MCF 10A (cell line): ENCODE measurements at regions of chr16 and their contacts with region 1.

Region 1: DNA sequence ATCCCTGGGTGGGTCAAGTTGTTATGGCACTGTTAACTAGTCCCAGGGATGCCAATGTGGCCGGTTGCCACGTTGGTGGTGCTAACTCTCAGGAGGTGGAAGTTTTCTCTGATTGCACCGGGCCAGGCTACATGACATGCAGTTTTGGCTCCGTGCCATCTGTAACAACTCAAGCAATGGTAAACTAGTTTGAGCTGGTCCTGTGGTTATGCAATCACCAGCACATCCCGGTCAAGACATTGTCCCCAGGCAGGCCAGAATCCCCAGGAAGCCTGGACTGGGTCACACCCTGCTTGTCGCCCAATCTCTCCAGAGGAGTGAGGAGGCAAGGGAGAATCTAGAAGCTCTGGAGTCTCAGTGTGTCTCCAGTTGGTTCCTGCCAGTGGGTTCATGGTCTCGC is 10.1 kb upstream of the CCL17 start:
- DNase-seq: peak; percentile 82
- H3K4me3 Mint-ChIP-seq: no peak overlapping the region
- H3K27ac Mint-ChIP-seq: no peak overlapping the region
- H3K4me1 Mint-ChIP-seq: no peaks in the 10 kb centered on the region
- H3K27me3 Mint-ChIP-seq: peaks cover 17% of the 10 kb centered on the region
- CTCF ChIP-seq: no peak

Region 2: DNA sequence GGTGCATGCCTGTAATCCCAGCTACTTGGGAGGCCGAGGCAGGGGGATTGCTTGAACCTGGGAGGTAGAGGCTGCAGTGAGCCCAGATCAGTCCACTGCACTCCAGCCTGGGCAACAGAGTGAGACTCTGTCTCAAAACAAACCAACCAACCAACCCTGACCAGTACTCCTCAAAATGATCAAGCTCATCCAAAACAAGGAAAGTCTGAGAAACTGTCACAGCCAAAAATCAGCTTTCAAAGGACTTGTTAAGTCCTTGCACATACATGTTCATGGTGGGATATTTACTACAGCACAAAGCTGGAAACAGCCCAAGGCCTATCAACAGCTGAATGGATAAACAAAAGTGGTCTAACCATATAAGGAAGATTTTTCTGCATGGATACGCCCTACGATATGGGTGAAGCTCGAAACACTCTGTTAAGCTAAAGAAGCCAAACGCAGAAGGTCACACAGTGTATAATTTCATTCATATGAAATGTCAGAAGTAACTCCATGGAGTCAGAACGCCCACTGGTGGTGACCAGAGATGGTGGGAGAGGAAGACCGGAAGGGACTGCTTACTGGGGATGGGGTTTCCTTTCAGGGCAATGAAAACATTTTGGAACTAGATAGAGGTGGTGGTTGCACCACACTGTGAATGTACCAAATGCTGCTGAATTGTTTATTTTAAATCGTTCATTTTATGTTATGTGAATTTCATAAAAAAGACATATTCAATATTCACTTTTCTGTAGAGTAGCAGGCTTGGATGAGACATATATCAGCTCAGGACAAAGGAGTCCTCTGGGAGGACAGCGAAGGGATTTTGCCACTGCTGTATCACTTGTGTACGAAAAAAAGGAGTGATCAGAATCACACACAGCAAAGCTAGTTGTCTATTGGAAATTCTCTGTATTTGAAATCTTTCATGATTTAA is 27.8 kb after region 1 on chr16:
- CTCF ChIA-PET with region 1: interaction called, 19 read pairs
- POLR2A ChIA-PET with region 1: no interaction called
- intact Hi-C with region 1: no loop called
- DNase-seq: peak; percentile 69
- H3K4me3 Mint-ChIP-seq: no peak overlapping the region
- H3K27ac Mint-ChIP-seq: no peak overlapping the region
- H3K4me1 Mint-ChIP-seq: peaks cover 21% of the 10 kb centered on the region
- H3K27me3 Mint-ChIP-seq: no peaks in the 10 kb centered on the region
- CTCF ChIP-seq: peak; percentile 51